Dendritic cell treated with granulocyte-macrophage colony-stimulating factor and Interleukin-4, amounts not matched to agents 40 ng/mL and 50 ng/mL, for 4 days (primary cell): ENCODE measurements at regions of chr5 and their contacts with region 1.

Region 1: DNA sequence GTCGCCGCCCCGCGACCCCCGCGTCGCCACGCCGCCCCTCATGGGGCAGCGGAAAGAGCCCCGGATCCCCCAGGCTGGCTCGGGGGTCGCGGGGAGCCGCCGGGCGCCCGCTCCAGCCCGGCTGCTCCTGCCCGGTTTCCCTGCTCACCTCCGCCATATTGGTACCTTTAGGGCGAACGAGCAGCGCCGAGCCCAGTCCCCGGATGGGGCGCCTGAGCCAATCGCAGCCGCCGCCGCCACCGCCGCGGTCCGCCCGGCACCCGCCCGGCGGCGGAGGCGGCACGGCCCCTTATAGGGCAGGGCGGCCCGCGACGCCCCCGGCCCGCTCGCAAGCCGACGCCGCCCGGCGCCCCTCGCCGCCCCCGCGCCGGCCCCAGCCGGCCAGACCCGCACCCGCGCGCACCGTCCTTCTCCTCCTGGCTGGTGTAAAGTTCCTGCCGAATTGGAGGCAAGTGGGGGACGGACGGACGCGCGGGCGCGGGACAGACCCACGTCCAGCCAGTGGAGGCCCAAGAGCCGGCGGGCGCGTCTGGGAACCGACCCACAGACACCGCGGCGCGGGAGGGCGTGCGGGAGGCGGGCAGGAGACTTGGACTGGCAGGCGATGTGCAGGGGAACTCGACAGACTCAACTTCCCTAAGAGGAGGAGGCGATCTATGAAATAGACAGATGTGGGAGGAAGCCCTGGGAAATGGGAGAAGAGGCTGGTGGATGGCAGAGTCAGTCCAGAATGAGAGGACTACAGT is at the start of gene MIER3:
- H3K4me3 Mint-ChIP-seq: peak within 1 kb of the TSS; percentile 89
- H3K27ac Mint-ChIP-seq: peak within 1 kb of the TSS; percentile 71
- H3K4me1 Mint-ChIP-seq: peaks cover 18% of the 10 kb centered on the region
- H3K27me3 Mint-ChIP-seq: peaks cover 16% of the 10 kb centered on the region

Region 2: DNA sequence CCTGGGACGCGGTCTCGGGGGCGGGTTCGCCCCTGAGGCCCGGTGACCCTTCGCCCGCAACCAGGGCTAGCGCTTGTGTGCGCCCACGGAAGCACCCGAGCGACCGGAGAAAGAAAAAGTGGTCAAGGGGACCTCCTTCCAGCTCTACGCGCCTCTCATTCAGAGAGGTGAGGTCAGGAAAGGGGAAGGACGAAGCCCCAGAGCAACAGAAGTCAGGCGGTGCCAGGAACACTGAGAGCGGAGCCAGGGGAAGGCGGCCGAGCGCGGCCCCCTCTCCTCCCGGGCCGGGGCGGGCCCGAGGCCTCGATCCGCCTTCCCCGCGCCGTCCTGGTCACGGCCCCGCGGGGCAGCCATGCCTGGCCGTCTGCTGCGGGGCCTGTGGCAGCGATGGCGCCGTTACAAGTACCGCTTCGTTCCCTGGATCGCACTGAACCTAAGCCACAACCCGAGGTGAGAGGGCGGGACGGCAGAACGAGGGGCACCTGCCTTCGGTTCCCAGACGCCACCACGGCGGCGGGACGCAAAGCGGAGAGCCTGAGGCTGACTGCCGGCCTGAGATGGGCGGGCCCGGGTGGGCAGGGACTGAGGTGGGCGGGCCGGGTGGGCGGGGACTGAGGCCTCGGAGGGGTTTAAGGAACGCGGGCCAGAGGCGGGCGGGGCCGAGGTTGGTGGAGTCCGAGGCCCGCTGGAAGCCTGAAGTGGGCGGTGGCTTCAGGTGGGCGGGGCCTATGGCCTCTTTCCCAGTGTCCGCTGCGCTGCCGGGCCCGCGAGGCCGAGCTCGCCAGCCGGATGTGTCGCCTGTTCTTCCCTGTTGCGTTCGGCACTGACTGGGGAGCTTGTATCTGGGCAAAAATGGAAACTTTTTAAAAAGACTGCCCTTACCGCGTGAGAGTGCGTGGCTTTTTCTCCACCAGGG is 42.6 kb before region 1 on chr5 and contains the start of gene SETD9:
- intact Hi-C with region 1: loop called (anchors 5 kb)
- H3K4me3 Mint-ChIP-seq: peak within 1 kb of the TSS; percentile 94
- H3K27ac Mint-ChIP-seq: peak within 1 kb of the TSS; percentile 97
- H3K4me1 Mint-ChIP-seq: peaks cover 22% of the 10 kb centered on the region
- H3K27me3 Mint-ChIP-seq: no peaks in the 10 kb centered on the region